ENCODE measurements at regions of chr12 and their contacts with region 1.

Region 1: DNA sequence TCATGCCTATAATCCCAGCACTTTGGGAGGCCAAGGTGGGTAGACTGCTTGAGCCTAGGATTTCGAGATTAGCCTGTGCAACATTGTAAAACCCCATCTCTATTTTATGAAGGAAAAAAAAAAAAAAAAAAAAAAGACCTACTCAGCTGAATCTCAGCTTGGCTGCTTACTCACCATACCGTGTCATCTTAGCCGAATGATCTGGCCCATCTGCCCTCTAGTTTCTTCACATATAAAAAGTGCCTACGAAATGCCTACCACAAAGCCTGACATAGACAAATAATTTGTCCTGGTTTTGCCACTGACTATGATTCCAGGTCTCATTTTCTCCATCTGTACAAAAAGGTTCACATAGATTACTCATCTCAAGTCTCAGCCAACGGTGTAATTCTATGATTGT is 10.1 kb downstream of the DIABLO start:
- DNase-seq: no peak
- H3K4me3 ChIP-seq: no peak overlapping the region
- H3K27ac ChIP-seq: no peak overlapping the region
- H3K4me1 ChIP-seq: no peaks in the 10 kb centered on the region
- H3K27me3 ChIP-seq: no peaks in the 10 kb centered on the region
- CTCF ChIP-seq: no peak
- EP300 ChIP-seq: no peak
- RAD21 ChIP-seq: no peak

Region 2: GRCh38 chr12:122203301-122204166 is 12.2 kb before region 1 on chr12 and contains the start of gene B3GNT4:
- CTCF ChIA-PET with region 1: interaction called, 27 read pairs
- POLR2A ChIA-PET with region 1: interaction called, 4 read pairs
- DNase-seq: peak; percentile 85
- H3K4me3 ChIP-seq: peak within 1 kb of the TSS; percentile 55 to 69
- H3K27ac ChIP-seq: peak within 1 kb of the TSS in 1 of 2 experiments; percentile 39; a peak in 1 of 4 replicates
- H3K4me1 ChIP-seq: peaks cover 0 to 27% of the 10 kb centered on the region in 2 experiments; a peak in 2 of 4 replicates
- H3K27me3 ChIP-seq: no peaks in the 10 kb centered on the region
- CTCF ChIP-seq: no peak
- EP300 ChIP-seq: no peak
- RAD21 ChIP-seq: no peak
- polyA plus RNA-seq, gene B3GNT4: 0.81 and 0.84 TPM in 2 replicates

Region 3: DNA sequence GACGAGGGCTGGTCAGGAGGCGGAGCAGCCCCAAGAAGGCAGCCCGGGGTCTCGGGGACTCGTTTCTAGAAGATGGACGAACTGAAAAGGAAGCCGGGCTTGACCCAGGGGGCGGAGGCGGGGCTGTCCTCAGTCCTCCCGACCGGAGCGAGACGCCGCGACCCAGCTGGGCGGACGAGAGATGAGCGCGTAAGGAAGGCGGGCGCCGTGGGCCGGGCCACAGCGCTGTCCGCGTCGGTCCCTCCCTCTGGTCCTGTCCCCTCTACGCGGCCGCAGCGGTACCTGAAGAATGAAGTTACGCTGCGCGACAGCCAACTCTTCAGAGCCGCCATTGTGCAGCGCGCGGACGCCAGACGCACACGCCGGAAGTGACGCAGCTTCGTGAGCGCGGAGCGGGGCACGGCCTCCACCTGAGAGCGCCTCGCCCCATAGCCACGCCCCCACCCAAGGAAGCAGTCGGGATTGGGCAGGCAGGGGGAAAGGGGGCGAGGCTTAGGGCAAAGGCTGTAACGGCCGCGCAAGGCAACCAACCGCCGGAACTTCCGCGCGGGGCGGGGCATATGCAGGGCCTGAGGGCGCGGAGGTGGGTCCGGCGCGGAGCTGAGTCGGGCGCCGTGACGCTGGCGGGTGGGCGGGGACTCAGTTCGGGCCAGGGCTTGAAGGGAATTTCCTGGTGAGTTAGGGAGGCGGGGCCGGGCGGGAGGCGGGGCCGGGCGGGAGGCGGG is 10.1 kb after region 1 on chr12 and contains the start of gene DIABLO:
- CTCF ChIA-PET with region 1: interaction called, 10 read pairs
- POLR2A ChIA-PET with region 1: interaction called, 6 read pairs
- DNase-seq: peak; percentile 96
- H3K4me3 ChIP-seq: peak within 1 kb of the TSS; percentile 76 to 95
- H3K27ac ChIP-seq: peak within 1 kb of the TSS; percentile 98 to 100
- H3K4me1 ChIP-seq: peaks cover 17 to 37% of the 10 kb centered on the region in 2 experiments
- H3K27me3 ChIP-seq: no peaks in the 10 kb centered on the region
- CTCF ChIP-seq: no peak
- EP300 ChIP-seq: no peak
- RAD21 ChIP-seq: 0 out of 2 replicates have a peak, but pooled peaks have one; percentile 10
- polyA plus RNA-seq, gene DIABLO: 65.6 and 78.9 TPM in 2 replicates

Measured in SK-N-SH (cell line).